Ascending aorta (tissue), 2 donors: ENCODE measurements at regions of chr17 and their contacts with region 1.

Region 1: GRCh38 chr17:43694077-43694870 is 32.6 kb upstream of the MEOX1 start:
- DNase-seq: peak in 1 of 2 donors; percentile 87
- H3K4me3 ChIP-seq: no peak overlapping the region
- H3K27ac ChIP-seq: no peak overlapping the region
- H3K4me1 ChIP-seq: peaks cover 8 to 46% of the 10 kb centered on the region in 2 donors
- H3K27me3 ChIP-seq: no peaks in the 10 kb centered on the region
- CTCF ChIP-seq: peak; percentile 90 to 96 (median 96)

Region 2: DNA sequence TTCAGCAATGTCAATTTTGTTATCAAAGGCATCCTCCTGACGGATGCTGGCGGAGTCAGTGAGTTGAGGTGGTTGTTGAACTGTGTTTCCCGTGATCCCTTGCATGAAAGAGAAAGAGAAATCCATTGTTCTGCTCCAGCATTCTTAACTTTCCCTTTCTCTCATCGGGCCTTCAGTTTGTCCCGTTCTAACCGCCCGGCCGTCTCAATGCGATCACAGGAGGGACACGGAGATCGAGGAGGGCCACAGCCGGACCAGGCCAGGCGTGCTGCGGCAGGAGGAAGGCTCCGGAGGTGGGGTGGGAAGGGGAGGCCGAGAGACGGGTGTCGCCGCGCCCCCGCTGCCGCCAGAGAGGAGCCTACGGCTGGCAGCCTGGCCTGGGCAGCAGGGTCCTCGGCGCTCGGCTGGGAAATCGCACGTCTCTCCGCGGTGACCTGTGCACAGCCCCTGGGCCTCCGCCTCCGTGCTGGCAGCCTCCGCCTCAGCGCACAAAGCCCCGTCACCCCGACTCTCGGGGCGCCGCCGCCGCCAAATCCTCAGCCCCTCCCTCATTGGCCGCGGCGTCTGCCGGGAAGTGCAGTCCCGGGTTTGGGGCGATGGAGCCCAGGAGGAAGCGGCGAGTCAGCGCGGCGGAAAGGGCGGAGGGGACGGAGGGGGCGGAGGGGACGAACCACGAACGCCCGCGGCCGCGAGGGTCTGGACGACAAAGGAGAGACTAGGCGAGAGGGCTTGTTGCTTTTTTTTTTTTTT is 26.2 kb after region 1 on chr17:
- intact Hi-C with region 1: loop called (anchors 2 kb)
- DNase-seq: peak; percentile 38 to 89
- H3K4me3 ChIP-seq: peak overlapping the region; percentile 58 to 77
- H3K27ac ChIP-seq: peak overlapping the region; percentile 93 to 97
- H3K4me1 ChIP-seq: peaks cover 0 to 6% of the 10 kb centered on the region in 2 donors
- H3K27me3 ChIP-seq: no peaks in the 10 kb centered on the region
- CTCF ChIP-seq: no peak

Region 3: GRCh38 chr17:43760254-43760852 is 66.1 kb after region 1 on chr17:
- intact Hi-C with region 1: loop called (anchors 1 kb)
- DNase-seq: peak; percentile 79 to 97
- H3K4me3 ChIP-seq: peak overlapping the region in 1 of 2 donors; percentile 18
- H3K27ac ChIP-seq: peak overlapping the region in 1 of 2 donors; percentile 31
- H3K4me1 ChIP-seq: peaks cover 1 to 20% of the 10 kb centered on the region in 2 donors
- H3K27me3 ChIP-seq: no peaks in the 10 kb centered on the region
- CTCF ChIP-seq: peak; percentile 98 to 100 (median 98)

Region 4: DNA sequence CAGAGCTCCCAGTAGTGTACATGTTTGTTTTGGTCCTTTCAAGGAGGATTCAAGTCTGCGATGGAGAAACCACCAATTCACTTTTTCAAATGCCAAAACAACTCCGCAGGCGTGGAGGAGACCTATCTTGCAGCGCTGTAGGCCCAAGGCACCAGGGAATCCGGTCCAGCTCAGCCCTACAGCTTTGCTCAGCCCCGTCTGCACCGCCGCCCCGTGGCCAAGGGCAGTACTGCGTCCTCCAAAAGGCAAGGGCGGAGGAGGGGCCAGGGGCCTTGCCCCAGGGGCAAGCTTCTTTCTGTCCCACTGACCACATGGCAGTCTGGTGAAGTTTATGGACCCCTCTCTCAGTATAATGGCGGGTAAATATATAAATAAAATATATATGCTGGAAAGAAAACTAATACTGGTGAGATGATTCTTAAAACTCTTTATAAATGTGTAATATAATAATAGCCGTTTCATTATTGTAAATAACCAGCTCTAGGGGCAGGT is 152.0 kb after region 1 on chr17:
- intact Hi-C with region 1: loop called (anchors 5 kb)
- DNase-seq: peak; percentile 21 to 92
- H3K4me3 ChIP-seq: no peak overlapping the region
- H3K27ac ChIP-seq: no peak overlapping the region
- H3K4me1 ChIP-seq: peaks cover 0 to 12% of the 10 kb centered on the region in 2 donors
- H3K27me3 ChIP-seq: no peaks in the 10 kb centered on the region
- CTCF ChIP-seq: peak; percentile 95 to 100 (median 99)